Endothelial cell of umbilical vein (primary cell): ENCODE measurements at regions of chr2 and their contacts with region 1.

Region 1: DNA sequence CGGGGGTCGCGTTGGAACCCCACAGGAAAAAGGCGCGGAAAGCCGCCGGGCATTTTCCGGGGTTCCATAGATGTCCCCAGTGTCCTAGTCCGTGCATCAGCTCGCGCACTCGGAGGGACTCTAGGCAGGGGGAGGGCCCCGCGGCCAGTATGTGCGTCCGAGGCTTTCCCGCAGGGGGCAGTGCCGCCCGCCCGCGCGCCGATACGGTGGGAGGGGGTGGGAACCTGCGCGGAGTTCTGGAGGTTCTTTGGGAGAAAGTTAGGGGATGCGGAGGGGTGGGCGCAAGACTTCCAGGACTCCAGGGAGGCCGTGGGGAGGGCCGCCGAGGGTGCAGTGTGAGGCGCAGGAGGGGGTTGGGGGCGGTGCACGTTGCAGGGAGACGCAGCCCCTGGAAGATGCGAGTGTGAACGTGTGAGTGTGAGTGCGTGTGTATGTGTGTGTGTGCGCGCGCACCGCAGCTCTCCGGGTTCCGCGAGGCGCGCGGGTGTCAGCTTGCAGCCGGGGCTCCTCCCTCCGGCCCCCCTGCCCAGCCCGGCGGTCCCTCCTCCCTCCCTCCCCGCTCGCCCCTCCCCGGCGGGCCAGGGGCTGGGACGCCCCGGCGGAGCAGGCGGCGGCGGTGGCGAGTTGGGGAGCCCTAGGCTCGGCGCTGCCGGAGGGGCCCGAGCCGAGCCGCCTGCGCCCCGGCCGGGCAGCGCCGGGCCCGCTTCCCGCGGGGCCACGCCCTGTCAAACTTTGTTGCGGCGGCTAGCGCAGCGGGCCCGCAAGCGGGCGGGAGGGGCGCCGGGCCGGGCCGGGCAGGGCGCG is at the start of gene TCF7L1:
- DNase-seq: peak; percentile 91
- H3K4me3 ChIP-seq: peak within 1 kb of the TSS; percentile 74 to 95 (median 79)
- H3K27ac ChIP-seq: no peak within 1 kb of the TSS
- H3K4me1 ChIP-seq: peaks cover 13% of the 10 kb centered on the region
- H3K27me3 ChIP-seq: peaks cover 3 to 6% of the 10 kb centered on the region in 2 experiments
- CTCF ChIP-seq: peak; percentile 82 to 91
- POLR2A ChIP-seq: peak; percentile 36
- total RNA-seq, gene TCF7L1: 13.2 and 17.4 TPM in 2 replicates

Region 2: DNA sequence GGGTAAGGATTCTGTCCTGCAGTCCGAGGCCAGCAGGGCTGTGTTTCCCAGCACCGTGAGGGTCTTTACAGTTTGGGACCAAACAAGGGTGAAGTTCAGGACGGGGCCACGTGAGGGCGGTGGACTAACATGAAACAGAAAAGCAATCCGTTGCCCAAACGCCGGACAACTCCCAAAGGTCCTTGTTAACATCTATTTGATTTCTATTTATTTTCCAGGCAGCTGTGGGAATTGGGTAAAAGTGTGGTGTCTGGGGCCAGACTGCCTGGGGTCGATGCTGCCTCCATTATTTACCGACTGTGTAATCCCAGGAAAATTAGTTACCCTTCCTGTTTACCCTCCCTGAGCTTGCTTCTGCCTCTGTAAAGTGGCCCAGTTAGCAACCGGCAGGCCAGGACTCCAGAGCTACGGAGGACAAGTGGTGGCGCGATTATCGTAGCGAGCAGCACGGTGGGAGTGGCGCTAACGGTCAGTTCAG is 66.1 kb before region 1 on chr2:
- CTCF ChIA-PET with region 1: interaction called, 81 read pairs
- POLR2A ChIA-PET with region 1: no interaction called
- dilution Hi-C with region 1: no loop called
- intact Hi-C with region 1: loop called (anchors 2 kb)
- DNase-seq: peak; percentile 83
- H3K4me3 ChIP-seq: peak overlapping the region in 1 of 3 experiments; percentile 24
- H3K27ac ChIP-seq: no peak overlapping the region
- H3K4me1 ChIP-seq: no peaks in the 10 kb centered on the region
- H3K27me3 ChIP-seq: peaks cover 4 to 7% of the 10 kb centered on the region in 2 experiments
- CTCF ChIP-seq: peak; percentile 76 to 80
- POLR2A ChIP-seq: no peak

Region 3: GRCh38 chr2:85181134-85181631 is 48.1 kb after region 1 on chr2:
- CTCF ChIA-PET with region 1: interaction called, 21 read pairs
- POLR2A ChIA-PET with region 1: no interaction called
- dilution Hi-C with region 1: no loop called
- intact Hi-C with region 1: loop called (anchors 2 kb)
- DNase-seq: no peak
- H3K4me3 ChIP-seq: no peak overlapping the region
- H3K27ac ChIP-seq: no peak overlapping the region
- H3K4me1 ChIP-seq: peaks cover 42% of the 10 kb centered on the region
- H3K27me3 ChIP-seq: no peaks in the 10 kb centered on the region
- CTCF ChIP-seq: no peak
- POLR2A ChIP-seq: no peak

Region 4: DNA sequence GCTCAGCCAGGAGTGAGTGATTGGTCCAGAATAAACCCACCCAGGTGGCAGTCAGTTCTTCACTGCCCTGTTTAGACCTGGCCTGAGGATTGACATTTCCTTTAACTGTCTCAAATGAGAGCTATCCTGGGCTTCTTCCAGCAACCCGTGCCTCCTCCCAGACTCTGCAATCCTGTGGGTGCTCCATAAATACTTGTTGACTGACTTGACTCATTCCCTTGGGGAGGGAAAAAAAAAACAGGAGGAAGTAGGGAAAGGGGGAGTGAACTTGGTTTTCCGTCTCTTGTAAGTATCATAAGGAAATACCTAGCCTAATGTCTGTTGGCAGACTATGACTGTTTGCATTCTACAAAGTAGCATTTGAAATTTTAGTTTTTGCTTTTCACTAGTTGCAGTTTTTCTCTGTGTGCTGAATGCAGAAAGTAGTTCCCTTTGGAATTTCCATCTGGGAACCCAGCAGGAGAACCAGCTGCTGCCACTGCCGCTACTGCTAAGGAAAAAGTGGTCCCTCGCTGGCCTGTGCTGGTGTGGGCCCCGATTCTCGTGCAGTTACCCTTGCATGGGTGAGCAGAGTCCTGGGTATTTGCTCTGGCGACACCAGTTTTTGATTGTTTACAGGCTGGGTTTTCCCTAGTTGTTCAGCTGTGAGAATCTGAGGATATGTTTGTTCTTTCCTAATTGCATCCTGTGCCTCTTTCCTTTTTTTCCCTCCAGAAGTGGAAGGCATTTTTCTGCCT is 115.9 kb after region 1 on chr2:
- CTCF ChIA-PET with region 1: interaction called, 41 read pairs
- POLR2A ChIA-PET with region 1: no interaction called
- dilution Hi-C with region 1: no loop called
- intact Hi-C with region 1: no loop called
- DNase-seq: peak; percentile 72
- H3K4me3 ChIP-seq: no peak overlapping the region
- H3K27ac ChIP-seq: peak overlapping the region; percentile 6
- H3K4me1 ChIP-seq: peaks cover 30% of the 10 kb centered on the region
- H3K27me3 ChIP-seq: no peaks in the 10 kb centered on the region
- CTCF ChIP-seq: no peak
- POLR2A ChIP-seq: no peak

Region 5: DNA sequence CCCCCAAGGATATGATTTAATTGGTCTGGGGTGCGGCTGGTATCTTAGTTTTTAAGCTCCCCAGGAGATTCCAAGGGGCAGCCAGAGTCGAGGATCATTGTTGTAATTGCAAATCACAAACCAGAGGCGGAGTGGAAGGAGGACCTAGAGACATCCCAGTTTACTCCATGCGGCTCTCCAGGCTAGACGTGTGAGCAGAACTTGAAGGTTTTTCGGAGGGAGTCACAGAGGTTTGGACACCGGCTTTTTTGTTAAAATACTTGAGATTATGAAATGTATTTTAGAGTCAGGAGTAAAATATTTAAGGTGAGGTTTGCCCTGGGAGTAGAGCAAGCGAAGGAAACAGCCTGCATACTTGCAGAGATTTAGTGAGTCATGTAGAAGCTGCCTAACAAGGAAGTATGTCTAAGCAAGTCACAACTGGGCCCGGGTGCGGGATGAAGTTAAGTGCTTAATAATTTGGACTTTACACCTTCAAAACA is 155.2 kb after region 1 on chr2:
- CTCF ChIA-PET with region 1: interaction called, 139 read pairs
- POLR2A ChIA-PET with region 1: no interaction called
- dilution Hi-C with region 1: no loop called
- intact Hi-C with region 1: loop called (anchors 1 kb)
- DNase-seq: no peak
- H3K4me3 ChIP-seq: no peak overlapping the region
- H3K27ac ChIP-seq: no peak overlapping the region
- H3K4me1 ChIP-seq: no peaks in the 10 kb centered on the region
- H3K27me3 ChIP-seq: no peaks in the 10 kb centered on the region
- CTCF ChIP-seq: no peak
- POLR2A ChIP-seq: no peak